ENCODE measurements at regions of chr3 and their contacts with region 1.

Region 1: DNA sequence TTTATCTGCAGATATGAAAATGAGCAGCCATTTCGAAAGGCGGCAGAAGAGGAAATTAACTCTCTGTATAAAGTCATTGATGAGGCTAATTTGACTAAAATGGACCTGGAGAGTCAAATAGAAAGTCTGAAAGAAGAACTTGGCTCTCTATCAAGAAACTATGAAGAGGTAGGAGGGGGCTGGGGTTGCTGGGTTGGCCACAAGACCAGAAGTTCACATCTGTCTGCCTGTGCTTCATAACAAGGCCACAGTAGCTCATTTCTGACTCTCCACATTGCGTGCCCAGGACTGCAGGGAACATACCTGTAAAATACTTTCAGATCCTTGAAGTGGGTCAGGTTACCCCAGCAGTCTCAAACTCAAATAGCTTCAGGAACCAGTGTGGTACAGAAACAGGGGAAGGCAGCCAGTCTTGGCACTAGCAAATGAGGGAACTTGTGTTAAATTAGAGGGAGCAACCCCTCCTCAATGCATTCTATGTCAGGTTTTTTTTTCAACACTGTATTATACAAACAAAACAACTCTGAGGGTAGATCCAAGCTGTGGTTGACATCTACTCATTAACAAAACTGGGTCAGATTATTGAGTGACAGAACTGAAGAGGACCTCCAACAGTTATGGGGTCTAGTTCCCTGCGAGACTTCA is 48.7 kb downstream of the BFSP2 start:
- DNase-seq: peak; percentile 97
- ATAC-seq: peak; percentile 97
- H3K4me3 ChIP-seq: peak overlapping the region; percentile 39; the same call in 1 of the 2 replicates
- H3K27ac ChIP-seq: peak overlapping the region; percentile 98
- H3K4me1 ChIP-seq: peaks cover 62% of the 10 kb centered on the region
- H3K27me3 ChIP-seq: no peaks in the 10 kb centered on the region
- CTCF ChIP-seq: no peak
- EP300 ChIP-seq: peak; percentile 90 to 93
- POLR2A ChIP-seq: 0 out of 2 replicates have a peak, but pooled peaks have one; percentile 56
- RAD21 ChIP-seq: no peak

Region 2: GRCh38 chr3:133464573-133464972 is 16.0 kb after region 1 on chr3:
- CTCF ChIA-PET with region 1: interaction called, 114 read pairs
- POLR2A ChIA-PET with region 1: interaction called, 7 read pairs
- RAD21 ChIA-PET with region 1: interaction called, 79 read pairs
- SMC1A ChIA-PET with region 1: interaction called, 380 read pairs
- in situ Hi-C with region 1: no loop called
- intact Hi-C with region 1: loop called (anchors 1 kb)
- DNase-seq: no peak
- ATAC-seq: peak; percentile 65
- H3K4me3 ChIP-seq: no peak overlapping the region
- H3K27ac ChIP-seq: peak overlapping the region; percentile 4; the same call in 1 of the 2 replicates
- H3K4me1 ChIP-seq: peaks cover 58% of the 10 kb centered on the region
- H3K27me3 ChIP-seq: no peaks in the 10 kb centered on the region
- CTCF ChIP-seq: peak; percentile 22 to 32 (median 23); a peak in 3 of 6 replicates
- EP300 ChIP-seq: no peak
- POLR2A ChIP-seq: no peak
- RAD21 ChIP-seq: peak; percentile 58

Region 3: DNA sequence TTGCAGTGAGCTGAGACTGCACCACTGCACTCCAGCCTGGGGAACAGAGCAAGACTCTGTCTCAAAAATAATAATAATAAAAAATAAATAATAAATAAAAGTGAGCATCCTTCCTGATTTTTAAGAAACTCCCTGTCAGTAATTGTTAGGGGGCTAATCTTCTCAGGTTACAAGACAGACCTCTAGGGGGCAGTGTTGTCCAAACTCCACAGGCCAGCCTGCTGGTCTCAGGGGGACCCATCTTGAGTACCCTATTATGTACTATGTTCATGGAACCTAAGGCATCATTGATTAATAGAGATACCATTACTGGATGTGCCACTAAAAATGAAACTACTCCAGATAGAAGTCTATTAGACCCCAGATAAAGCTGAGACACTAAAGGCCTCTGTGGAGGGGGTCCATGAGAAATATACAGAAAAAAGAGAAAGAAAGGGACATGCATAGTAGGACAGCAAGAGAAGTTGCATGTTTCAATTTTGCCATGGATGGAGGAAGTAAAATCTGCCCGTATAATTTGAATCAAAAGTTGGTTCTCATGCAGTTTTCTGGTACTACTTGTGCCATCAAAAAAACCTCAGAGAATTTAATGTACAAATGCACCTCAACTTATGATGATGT is 39.4 kb after region 1 on chr3:
- CTCF ChIA-PET with region 1: interaction called, 6 read pairs
- POLR2A ChIA-PET with region 1: interaction called, 3 read pairs
- RAD21 ChIA-PET with region 1: interaction called, 7 read pairs
- SMC1A ChIA-PET with region 1: interaction called, 35 read pairs
- in situ Hi-C with region 1: no loop called
- intact Hi-C with region 1: loop called (anchors 5 kb)
- DNase-seq: no peak
- ATAC-seq: no peak
- H3K4me3 ChIP-seq: no peak overlapping the region; the same call in 1 of the 2 replicates
- H3K27ac ChIP-seq: no peak overlapping the region
- H3K4me1 ChIP-seq: peaks cover 48% of the 10 kb centered on the region
- H3K27me3 ChIP-seq: no peaks in the 10 kb centered on the region
- CTCF ChIP-seq: peak; percentile 26 to 36 (median 35); a peak in 3 of 6 replicates
- EP300 ChIP-seq: no peak
- POLR2A ChIP-seq: no peak
- RAD21 ChIP-seq: peak; percentile 57

Region 4: GRCh38 chr3:133506215-133506901 is 57.8 kb after region 1 on chr3:
- CTCF ChIA-PET with region 1: interaction called, 5 read pairs
- POLR2A ChIA-PET with region 1: interaction called, 3 read pairs
- RAD21 ChIA-PET with region 1: interaction called, 5 read pairs
- SMC1A ChIA-PET with region 1: interaction called, 12 read pairs
- in situ Hi-C with region 1: no loop called
- intact Hi-C with region 1: no loop called
- DNase-seq: peak; percentile 93
- ATAC-seq: peak; percentile 98
- H3K4me3 ChIP-seq: peak overlapping the region; percentile 43; the same call in 1 of the 2 replicates
- H3K27ac ChIP-seq: peak overlapping the region; percentile 97
- H3K4me1 ChIP-seq: peaks cover 18% of the 10 kb centered on the region
- H3K27me3 ChIP-seq: no peaks in the 10 kb centered on the region
- CTCF ChIP-seq: no peak
- EP300 ChIP-seq: peak in 1 of 2 experiments; percentile 61; a peak in 3 of 4 replicates
- POLR2A ChIP-seq: peak; percentile 49; the same call in 1 of the 2 replicates
- RAD21 ChIP-seq: 0 out of 2 replicates have a peak, but pooled peaks have one; percentile 17

Region 5: DNA sequence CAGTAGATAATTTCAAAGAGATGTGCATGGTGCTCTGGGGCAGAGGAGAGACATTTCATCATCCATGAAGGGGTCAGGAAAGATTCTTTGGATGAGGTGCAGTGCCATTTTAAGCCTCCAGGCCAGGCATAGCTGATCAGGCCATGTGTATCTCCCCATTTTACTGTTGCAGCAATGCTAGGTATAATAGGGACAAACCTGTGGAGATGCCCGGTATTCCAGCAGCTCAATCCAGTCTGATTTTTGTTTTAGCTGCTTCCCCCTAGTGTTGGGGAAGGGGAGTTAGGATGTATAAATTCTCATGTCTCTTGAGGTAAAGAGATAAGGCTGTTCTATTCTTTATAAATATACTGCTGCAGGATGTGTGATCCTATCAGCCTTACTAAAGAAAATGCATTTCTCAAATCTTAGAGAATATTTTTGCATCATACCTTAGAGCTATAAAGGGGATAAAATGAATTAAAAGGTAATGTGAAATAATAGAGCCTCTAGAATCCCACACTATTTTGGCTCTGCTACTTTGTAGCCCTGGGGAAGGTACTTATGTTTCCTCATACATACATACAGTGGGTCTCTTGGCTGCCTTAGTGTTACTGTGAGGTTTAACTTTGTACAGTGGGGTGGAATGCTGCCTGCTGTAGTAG is 130.1 kb after region 1 on chr3:
- CTCF ChIA-PET with region 1: interaction called, 30 read pairs
- POLR2A ChIA-PET with region 1: interaction called, 30 read pairs
- RAD21 ChIA-PET with region 1: interaction called, 56 read pairs
- SMC1A ChIA-PET with region 1: interaction called, 92 read pairs
- in situ Hi-C with region 1: loop called (anchors 5 kb)
- intact Hi-C with region 1: loop called (anchors 1 kb)
- DNase-seq: no peak
- ATAC-seq: peak; percentile 6
- H3K4me3 ChIP-seq: peak overlapping the region; percentile 91
- H3K27ac ChIP-seq: no peak overlapping the region
- H3K4me1 ChIP-seq: peaks cover 12% of the 10 kb centered on the region
- H3K27me3 ChIP-seq: no peaks in the 10 kb centered on the region
- CTCF ChIP-seq: peak; percentile 27 to 51 (median 48); a peak in 5 of 6 replicates
- EP300 ChIP-seq: no peak
- POLR2A ChIP-seq: no peak
- RAD21 ChIP-seq: peak; percentile 47

Region 6: GRCh38 chr3:133644768-133645167 is 196.2 kb after region 1 on chr3:
- CTCF ChIA-PET with region 1: no interaction called
- POLR2A ChIA-PET with region 1: no interaction called
- RAD21 ChIA-PET with region 1: no interaction called
- SMC1A ChIA-PET with region 1: no interaction called
- in situ Hi-C with region 1: no loop called
- intact Hi-C with region 1: no loop called
- DNase-seq: no peak
- ATAC-seq: no peak
- H3K4me3 ChIP-seq: no peak overlapping the region
- H3K27ac ChIP-seq: no peak overlapping the region
- H3K4me1 ChIP-seq: no peaks in the 10 kb centered on the region
- H3K27me3 ChIP-seq: no peaks in the 10 kb centered on the region
- CTCF ChIP-seq: no peak
- EP300 ChIP-seq: no peak
- POLR2A ChIP-seq: no peak
- RAD21 ChIP-seq: no peak

Region 7: DNA sequence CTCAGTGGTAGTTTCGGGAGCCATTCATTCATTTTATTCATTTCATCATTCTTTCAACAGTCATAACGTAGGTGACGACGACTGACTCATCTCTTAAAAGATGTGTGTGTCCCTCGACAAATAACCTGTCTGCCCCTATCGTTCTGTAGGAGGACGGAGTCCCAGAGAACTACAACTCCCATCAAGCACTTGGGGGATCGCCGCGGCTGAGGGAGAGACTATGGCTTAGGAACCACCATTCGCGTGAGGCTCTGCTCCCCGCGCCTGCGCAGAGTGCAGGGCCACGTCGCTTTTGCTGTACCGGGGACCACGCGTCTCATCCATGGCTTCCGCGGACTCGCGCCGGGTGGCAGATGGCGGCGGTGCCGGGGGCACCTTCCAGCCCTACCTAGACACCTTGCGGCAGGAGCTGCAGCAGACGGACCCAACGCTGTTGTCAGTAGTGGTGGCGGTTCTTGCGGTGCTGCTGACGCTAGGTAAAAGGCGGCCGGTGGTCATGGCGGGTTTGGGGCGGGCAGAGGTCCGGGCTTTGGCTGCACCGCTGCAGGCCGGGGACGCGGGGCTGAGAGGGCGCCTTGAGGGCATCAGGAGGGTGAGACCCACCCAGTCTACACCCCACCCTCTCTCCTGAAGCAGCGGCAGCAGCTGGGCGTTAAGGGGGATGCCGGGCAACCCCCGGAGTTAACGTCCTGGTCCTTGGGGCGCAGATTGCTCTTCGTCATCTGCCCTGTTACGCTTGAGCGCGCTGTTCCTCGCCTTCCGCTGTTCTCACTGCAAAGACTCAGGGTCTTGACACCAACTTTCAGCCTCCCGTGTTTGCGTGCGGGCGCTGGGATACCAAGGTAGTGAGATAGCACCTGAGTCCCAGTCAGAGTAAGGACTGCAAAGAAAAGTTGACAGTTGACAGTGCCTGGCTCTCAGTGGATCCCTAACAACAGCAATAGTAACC is 357.2 kb after region 1 on chr3 and contains the start of gene SRPRB:
- CTCF ChIA-PET with region 1: no interaction called
- POLR2A ChIA-PET with region 1: no interaction called
- RAD21 ChIA-PET with region 1: no interaction called
- SMC1A ChIA-PET with region 1: no interaction called
- in situ Hi-C with region 1: no loop called
- intact Hi-C with region 1: loop called (anchors 5 kb)
- DNase-seq: peak; percentile 87
- ATAC-seq: peak; percentile 98
- H3K4me3 ChIP-seq: peak within 1 kb of the TSS; percentile 74
- H3K27ac ChIP-seq: peak within 1 kb of the TSS; percentile 60
- H3K4me1 ChIP-seq: no peaks in the 10 kb centered on the region
- H3K27me3 ChIP-seq: no peaks in the 10 kb centered on the region
- CTCF ChIP-seq: no peak
- EP300 ChIP-seq: 0 out of 4 replicates have a peak, but pooled peaks of 1 of the 2 experiments have one; percentile 8
- POLR2A ChIP-seq: peak; percentile 99
- RAD21 ChIP-seq: no peak
- polyA plus RNA-seq, gene SRPRB: 30.6 to 39.1 TPM